ENCODE measurements at regions of chr14 and their contacts with region 1.

Region 1: DNA sequence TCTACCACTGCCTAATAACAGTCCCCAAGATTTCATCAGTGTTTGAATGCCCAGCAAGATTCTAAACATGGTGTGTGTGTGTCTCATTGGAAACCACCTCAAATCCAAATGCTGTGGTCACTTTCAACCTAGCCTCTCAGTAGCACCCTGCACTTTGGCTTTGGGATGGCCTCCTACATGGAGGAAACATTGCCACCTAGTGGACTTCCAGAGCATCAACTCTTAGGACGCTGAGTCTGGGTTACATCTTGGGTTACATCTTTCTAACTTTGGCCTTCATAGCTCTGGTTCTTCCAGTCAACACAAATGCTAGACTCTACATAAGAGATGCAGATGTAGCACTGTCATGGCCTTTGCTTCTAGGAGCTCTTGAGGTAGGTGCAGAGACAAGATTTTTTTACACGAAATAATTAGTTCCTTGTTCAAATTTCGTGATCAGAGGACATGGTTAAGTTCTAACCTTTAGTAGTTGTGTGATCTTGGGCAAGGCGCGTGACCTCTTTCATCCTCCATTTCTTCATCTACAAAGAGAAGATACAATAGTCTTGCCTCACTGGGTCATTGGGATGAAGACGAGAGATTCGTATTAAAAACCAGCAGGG is 113.5 kb upstream of the VASH1 start:
- DNase-seq: peak; percentile 62
- H3K4me3 ChIP-seq: no peak overlapping the region
- H3K27ac ChIP-seq: no peak overlapping the region
- H3K4me1 ChIP-seq: peaks cover 0 to 9% of the 10 kb centered on the region in 2 experiments; a peak in 1 of 4 replicates
- H3K27me3 ChIP-seq: no peaks in the 10 kb centered on the region
- CTCF ChIP-seq: peak; percentile 83
- EP300 ChIP-seq: no peak
- RAD21 ChIP-seq: peak; percentile 78

Region 2: GRCh38 chr14:76673261-76673660 is 25.5 kb after region 1 on chr14:
- CTCF ChIA-PET with region 1: interaction called, 13 read pairs
- POLR2A ChIA-PET with region 1: no interaction called
- DNase-seq: no peak
- H3K4me3 ChIP-seq: no peak overlapping the region
- H3K27ac ChIP-seq: no peak overlapping the region
- H3K4me1 ChIP-seq: no peaks in the 10 kb centered on the region; a peak in 1 of 4 replicates
- H3K27me3 ChIP-seq: peaks cover 9% of the 10 kb centered on the region; the same call in 1 of the 2 replicates
- CTCF ChIP-seq: no peak
- EP300 ChIP-seq: no peak
- RAD21 ChIP-seq: no peak